A673 (cell line): ENCODE measurements at regions of chr18 and their contacts with region 1.

Region 1: GRCh38 chr18:8721716-8722115 is 16.4 kb downstream of the MTCL1 start:
- DNase-seq: peak; percentile 58
- H3K4me3 ChIP-seq: no peak overlapping the region
- H3K27ac ChIP-seq: no peak overlapping the region
- H3K4me1 ChIP-seq: no peaks in the 10 kb centered on the region
- H3K27me3 ChIP-seq: no peaks in the 10 kb centered on the region
- CTCF ChIP-seq: no peak

Region 2: GRCh38 chr18:8735274-8735673 is 13.6 kb after region 1 on chr18:
- CTCF ChIA-PET with region 1: no interaction called
- POLR2A ChIA-PET with region 1: no interaction called
- intact Hi-C with region 1: no loop called
- DNase-seq: no peak
- H3K4me3 ChIP-seq: no peak overlapping the region
- H3K27ac ChIP-seq: no peak overlapping the region
- H3K4me1 ChIP-seq: no peaks in the 10 kb centered on the region
- H3K27me3 ChIP-seq: no peaks in the 10 kb centered on the region
- CTCF ChIP-seq: no peak

Region 3: GRCh38 chr18:8816816-8817215 is 95.1 kb after region 1 on chr18:
- CTCF ChIA-PET with region 1: no interaction called
- POLR2A ChIA-PET with region 1: no interaction called
- intact Hi-C with region 1: loop called (anchors 10 kb)
- DNase-seq: no peak
- H3K4me3 ChIP-seq: no peak overlapping the region
- H3K27ac ChIP-seq: no peak overlapping the region
- H3K4me1 ChIP-seq: no peaks in the 10 kb centered on the region
- H3K27me3 ChIP-seq: no peaks in the 10 kb centered on the region
- CTCF ChIP-seq: no peak